ENCODE measurements at regions of chr10 and their contacts with region 1.

Region 1: DNA sequence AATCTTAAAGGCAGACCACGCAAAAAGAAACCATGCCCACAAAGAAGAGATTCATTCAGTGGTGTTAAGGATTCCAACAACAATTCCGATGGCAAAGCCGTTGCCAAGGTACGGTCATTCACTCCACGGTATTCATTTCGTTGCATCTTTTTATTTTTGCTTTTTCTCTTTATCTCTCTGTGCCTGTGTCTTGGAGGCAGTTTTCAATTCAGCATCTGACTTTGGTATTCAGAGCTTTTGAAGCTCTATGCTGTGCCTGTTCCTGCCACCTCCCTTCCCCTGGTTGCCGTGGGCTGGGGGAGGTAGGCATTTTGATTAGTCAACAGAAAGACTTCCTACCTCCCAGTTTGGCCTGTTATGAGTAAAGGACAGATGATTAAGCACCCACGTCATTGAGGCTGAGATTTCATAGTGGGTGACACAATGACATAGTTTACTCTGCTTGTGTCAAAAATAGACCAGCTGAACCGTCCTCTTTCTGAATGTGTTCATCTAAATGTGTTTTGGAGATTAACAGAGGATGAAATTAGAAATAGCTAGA is 149.5 kb downstream of the ARID5B start:
- DNase-seq: peak; percentile 72
- H3K4me3 Mint-ChIP-seq: peak overlapping the region; percentile 97
- H3K27ac Mint-ChIP-seq: peak overlapping the region; percentile 99
- H3K4me1 Mint-ChIP-seq: peaks cover 86% of the 10 kb centered on the region
- H3K27me3 Mint-ChIP-seq: no peaks in the 10 kb centered on the region

Region 2: GRCh38 chr10:61786728-61787127 is 264.2 kb before region 1 on chr10:
- intact Hi-C with region 1: loop called (anchors 2 kb)
- DNase-seq: no peak
- H3K4me3 Mint-ChIP-seq: no peak overlapping the region
- H3K27ac Mint-ChIP-seq: no peak overlapping the region
- H3K4me1 Mint-ChIP-seq: peaks cover 56% of the 10 kb centered on the region
- H3K27me3 Mint-ChIP-seq: no peaks in the 10 kb centered on the region

Region 3: DNA sequence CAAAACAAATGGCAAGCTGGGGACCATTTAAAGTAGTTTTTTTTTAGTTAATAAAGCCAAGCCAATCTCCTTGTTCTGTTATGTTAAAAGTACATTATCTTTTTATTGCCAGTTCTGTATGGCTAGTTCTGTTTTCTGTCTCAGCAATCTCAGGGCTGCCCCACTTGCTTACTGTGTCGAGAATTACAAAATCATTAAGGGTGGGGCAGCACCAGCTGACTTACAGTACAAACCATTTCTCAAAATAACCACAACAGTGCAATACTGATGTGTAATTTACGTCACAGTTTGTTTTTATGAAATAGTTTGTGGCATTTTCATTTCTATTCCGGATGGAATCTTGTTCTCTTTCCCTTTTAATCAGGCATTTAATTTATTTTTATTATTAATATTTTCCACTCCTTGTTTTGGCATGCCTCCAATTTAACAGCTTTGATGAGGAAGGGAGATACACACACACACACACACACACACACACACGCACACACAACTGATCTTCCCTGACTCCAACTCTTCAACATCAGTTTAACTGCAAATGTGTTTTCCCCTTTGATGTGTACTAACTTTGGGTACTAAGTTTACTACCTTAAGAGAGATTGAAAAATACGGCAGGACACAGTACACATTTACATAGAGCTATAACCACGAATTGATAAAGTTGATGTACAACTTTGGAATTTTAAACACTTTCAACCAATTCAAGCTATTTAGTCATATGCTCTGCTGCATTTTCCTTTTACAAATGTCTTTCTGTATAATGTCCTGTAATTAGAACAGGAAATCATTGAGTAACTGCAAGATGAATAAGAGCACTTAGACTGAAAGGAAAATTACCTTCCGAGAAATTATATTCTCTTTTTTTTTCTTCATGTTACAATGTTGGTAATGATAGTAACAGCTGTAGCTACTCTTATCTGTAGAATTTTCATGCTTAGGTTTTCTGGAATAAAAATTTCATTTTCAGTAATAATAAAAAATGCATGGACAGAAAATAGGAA is 58.0 kb before region 1 on chr10:
- intact Hi-C with region 1: loop called (anchors 1 kb)
- DNase-seq: peak; percentile 49
- H3K4me3 Mint-ChIP-seq: peak overlapping the region; percentile 73
- H3K27ac Mint-ChIP-seq: peak overlapping the region; percentile 88
- H3K4me1 Mint-ChIP-seq: peaks cover 68% of the 10 kb centered on the region
- H3K27me3 Mint-ChIP-seq: no peaks in the 10 kb centered on the region

Region 4: DNA sequence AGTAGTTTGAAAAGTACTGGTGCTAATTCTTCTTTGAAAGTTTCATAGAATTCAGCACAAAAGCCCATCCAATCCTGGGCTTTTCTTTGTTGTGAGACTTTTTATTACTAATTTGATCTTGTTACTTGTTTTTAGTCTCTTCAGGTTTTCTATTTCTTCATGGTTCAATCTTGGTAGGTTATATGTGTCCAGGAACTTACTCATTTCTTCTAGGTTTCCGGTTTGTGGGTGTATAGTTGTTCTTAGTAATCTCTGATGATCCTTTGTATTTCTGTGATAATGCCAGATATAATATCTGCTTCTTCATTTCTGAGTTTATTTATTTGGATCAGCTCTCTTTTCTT is 70.2 kb after region 1 on chr10:
- intact Hi-C with region 1: loop called (anchors 5 kb)
- DNase-seq: no peak
- H3K4me3 Mint-ChIP-seq: no peak overlapping the region
- H3K27ac Mint-ChIP-seq: peak overlapping the region; percentile 66
- H3K4me1 Mint-ChIP-seq: peaks cover 27% of the 10 kb centered on the region
- H3K27me3 Mint-ChIP-seq: no peaks in the 10 kb centered on the region

Region 5: GRCh38 chr10:62437696-62438095 is 386.7 kb after region 1 on chr10:
- intact Hi-C with region 1: loop called (anchors 10 kb)
- DNase-seq: no peak
- H3K4me3 Mint-ChIP-seq: no peak overlapping the region
- H3K27ac Mint-ChIP-seq: no peak overlapping the region
- H3K4me1 Mint-ChIP-seq: peaks cover 12% of the 10 kb centered on the region
- H3K27me3 Mint-ChIP-seq: peaks cover 50% of the 10 kb centered on the region

Region 6: GRCh38 chr10:62816331-62817120 is 765.6 kb after region 1 on chr10 and contains the start of gene EGR2:
- intact Hi-C with region 1: loop called (anchors 1 kb)
- DNase-seq: peak; percentile 94
- H3K4me3 Mint-ChIP-seq: peak within 1 kb of the TSS; percentile 97
- H3K27ac Mint-ChIP-seq: peak within 1 kb of the TSS; percentile 100
- H3K4me1 Mint-ChIP-seq: peaks cover 45% of the 10 kb centered on the region
- H3K27me3 Mint-ChIP-seq: peaks cover 22% of the 10 kb centered on the region
- total RNA-seq, gene EGR2: 126 and 137 TPM in 2 replicates

Region 7: GRCh38 chr10:63268798-63269503 is 1218.0 kb after region 1 on chr10:
- intact Hi-C with region 1: loop called (anchors 5 kb)
- DNase-seq: peak; percentile 81
- H3K4me3 Mint-ChIP-seq: peak overlapping the region; percentile 92
- H3K27ac Mint-ChIP-seq: peak overlapping the region; percentile 94
- H3K4me1 Mint-ChIP-seq: peaks cover 25% of the 10 kb centered on the region
- H3K27me3 Mint-ChIP-seq: no peaks in the 10 kb centered on the region

Measured in activated T-helper 2 cell treated with anti-CD3 and anti-CD28 coated beads, Interferon-gamma antibody, Interleukin-2, Interleukin-4, amounts not matched to agents 10 μg/mL and 5 μg/mL and 100 μg/mL, durations not matched to agents 14 hours and 24 hours and 36 hours (primary cell).